Activated CD8-positive, alpha-beta T cell treated with anti-CD3 and anti-CD28 coated beads for 36 hours (primary cell): ENCODE measurements at regions of chr2 and their contacts with region 1.

Region 1: DNA sequence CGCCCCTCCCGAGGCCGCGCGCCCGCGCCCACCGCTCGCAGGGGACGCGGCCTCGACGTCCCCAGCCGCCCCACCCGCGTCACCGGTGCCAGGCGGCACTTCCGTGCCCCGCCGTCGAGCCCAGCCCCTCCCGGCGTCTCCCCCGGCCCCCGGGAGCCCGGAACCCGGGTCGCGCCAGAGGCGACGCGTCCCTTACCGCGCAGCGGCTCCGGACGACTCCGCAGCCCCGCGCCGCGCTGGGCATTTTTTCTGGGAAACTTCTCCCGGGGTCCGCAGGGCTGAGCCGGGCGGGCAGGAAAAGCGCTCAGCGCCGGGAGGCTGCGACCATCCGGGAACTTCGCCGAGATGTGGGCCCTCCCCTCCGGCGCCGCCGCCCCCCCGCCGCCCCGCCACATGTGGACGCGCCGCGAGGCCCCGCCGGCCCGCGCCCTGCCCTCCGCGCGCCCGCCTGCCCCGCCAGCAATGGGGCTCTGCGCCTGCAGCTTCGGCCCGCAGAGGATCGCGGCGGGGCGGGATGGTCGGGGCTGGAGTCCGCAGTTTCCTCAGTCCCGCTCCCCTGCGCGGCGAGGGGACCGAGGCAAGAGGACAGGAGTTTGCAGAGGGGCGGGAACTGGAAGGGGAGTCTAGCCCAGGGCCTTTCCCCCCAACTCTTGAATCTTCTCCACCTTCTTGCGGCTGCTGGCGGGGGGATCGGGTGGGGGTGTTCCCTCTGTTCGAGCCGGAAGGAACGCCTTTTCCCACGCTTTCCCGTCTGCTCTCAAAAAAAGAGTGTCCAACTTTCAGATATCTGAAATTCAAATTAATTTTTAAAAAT is 81.5 kb downstream of the CHRNA1 start:
- DNase-seq: peak; percentile 57
- ATAC-seq: peak; percentile 70
- H3K4me3 Mint-ChIP-seq: peak overlapping the region; percentile 88
- H3K27ac Mint-ChIP-seq: peak overlapping the region; percentile 92
- H3K4me1 Mint-ChIP-seq: peaks cover 62% of the 10 kb centered on the region
- H3K27me3 Mint-ChIP-seq: no peaks in the 10 kb centered on the region
- CTCF ChIP-seq: no peak

Region 2: DNA sequence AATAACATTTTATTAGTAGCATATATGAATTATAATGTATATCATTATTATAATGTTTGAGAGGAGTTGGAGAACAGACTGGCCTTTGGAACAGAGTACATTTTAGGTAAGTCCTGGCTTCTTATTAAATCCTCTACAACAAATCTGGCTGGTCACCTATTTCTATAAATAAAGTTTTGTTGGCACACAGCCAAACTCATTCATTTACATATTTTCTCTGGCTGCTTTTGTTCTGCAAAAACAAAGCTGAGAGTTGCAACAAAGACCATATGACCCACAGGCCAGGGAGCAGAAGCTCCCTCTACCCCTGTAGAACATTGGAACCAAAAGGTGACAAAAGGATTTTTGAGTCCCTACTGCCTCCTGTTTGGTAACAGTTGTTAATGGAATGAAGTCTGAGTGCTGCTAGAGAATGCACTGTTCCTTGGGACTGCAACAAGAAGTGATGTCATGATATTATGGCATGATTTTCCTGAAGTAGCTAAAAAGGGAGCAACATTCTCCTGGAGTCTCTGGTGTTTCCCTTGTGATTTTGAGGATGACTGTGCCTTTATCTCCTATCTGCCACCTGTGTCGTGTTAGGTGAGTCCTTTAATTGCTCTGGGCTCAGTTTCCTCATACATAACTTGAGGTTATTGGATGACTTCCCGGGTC is 370.1 kb before region 1 on chr2:
- CTCF ChIA-PET with region 1: no interaction called
- POLR2A ChIA-PET with region 1: no interaction called
- intact Hi-C with region 1: no loop called
- DNase-seq: no peak
- ATAC-seq: no peak
- H3K4me3 Mint-ChIP-seq: no peak overlapping the region
- H3K27ac Mint-ChIP-seq: no peak overlapping the region
- H3K4me1 Mint-ChIP-seq: no peaks in the 10 kb centered on the region
- H3K27me3 Mint-ChIP-seq: peaks cover 27% of the 10 kb centered on the region
- CTCF ChIP-seq: no peak

Region 3: GRCh38 chr2:174585146-174585954 is 97.4 kb before region 1 on chr2:
- CTCF ChIA-PET with region 1: interaction called, 143 read pairs
- POLR2A ChIA-PET with region 1: interaction called, 3 read pairs
- intact Hi-C with region 1: loop called (anchors 5 kb)
- DNase-seq: no peak
- ATAC-seq: no peak
- H3K4me3 Mint-ChIP-seq: no peak overlapping the region
- H3K27ac Mint-ChIP-seq: peak overlapping the region; percentile 27
- H3K4me1 Mint-ChIP-seq: peaks cover 91% of the 10 kb centered on the region
- H3K27me3 Mint-ChIP-seq: no peaks in the 10 kb centered on the region
- CTCF ChIP-seq: no peak

Region 4: DNA sequence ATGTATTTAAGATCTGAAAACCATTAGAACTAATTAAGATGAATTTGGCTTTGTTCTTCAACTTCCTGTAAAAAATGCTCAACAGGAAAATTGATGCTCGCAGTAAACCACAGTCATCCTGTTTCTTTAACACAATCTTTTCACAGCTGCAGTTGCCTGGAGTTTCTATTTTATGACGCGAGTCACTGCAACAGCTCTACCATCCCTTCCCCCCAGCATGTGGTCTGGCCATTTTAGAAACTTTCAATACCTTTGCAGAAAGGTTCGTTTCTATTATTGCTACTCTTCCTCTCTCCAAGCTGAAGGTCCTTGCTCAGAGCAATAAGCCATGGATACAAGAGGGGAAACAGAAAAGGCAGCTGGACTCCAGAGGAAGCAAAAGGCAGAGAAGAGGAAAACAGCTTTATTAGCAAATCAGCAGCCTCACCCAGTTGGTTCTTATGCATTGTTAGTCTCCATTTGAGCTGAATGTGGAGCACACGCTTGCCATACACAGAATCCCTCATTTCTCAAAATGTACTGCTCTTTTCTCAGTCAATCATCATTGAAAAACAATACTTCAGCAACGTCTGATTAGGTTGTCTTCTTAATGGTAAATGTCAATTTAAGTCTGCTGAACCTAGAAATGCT is 89.1 kb before region 1 on chr2:
- CTCF ChIA-PET with region 1: interaction called, 70 read pairs
- POLR2A ChIA-PET with region 1: interaction called, 43 read pairs
- intact Hi-C with region 1: loop called (anchors 5 kb)
- DNase-seq: peak; percentile 88
- ATAC-seq: peak; percentile 71
- H3K4me3 Mint-ChIP-seq: peak overlapping the region; percentile 87
- H3K27ac Mint-ChIP-seq: peak overlapping the region; percentile 99
- H3K4me1 Mint-ChIP-seq: peaks cover 40% of the 10 kb centered on the region
- H3K27me3 Mint-ChIP-seq: no peaks in the 10 kb centered on the region
- CTCF ChIP-seq: no peak

Region 5: GRCh38 chr2:174722942-174723592 is 40.3 kb after region 1 on chr2:
- CTCF ChIA-PET with region 1: no interaction called
- POLR2A ChIA-PET with region 1: no interaction called
- intact Hi-C with region 1: no loop called
- DNase-seq: no peak
- ATAC-seq: no peak
- H3K4me3 Mint-ChIP-seq: no peak overlapping the region
- H3K27ac Mint-ChIP-seq: no peak overlapping the region
- H3K4me1 Mint-ChIP-seq: peaks cover 19% of the 10 kb centered on the region
- H3K27me3 Mint-ChIP-seq: peaks cover 2% of the 10 kb centered on the region
- CTCF ChIP-seq: no peak

Region 6: DNA sequence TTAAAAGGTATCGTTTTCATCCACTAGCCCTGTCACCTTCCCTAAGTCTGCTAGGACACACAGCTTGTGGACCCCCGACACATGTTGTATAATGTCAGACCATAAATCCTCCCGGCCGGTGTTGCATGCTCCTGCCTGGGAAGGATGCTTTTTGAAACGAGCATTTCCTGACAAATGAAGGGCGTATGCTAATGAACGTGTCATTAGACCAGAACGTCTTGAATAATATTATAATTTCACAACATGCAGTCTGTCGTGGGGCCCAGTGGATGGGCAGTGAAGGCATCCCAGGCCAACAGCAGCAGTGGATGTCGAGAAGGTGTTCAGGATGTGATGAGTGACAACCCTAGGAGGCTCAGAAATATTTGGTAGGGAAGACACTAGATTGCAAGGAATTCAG is 74.0 kb after region 1 on chr2:
- CTCF ChIA-PET with region 1: no interaction called
- POLR2A ChIA-PET with region 1: no interaction called
- intact Hi-C with region 1: no loop called
- DNase-seq: no peak
- ATAC-seq: no peak
- H3K4me3 Mint-ChIP-seq: no peak overlapping the region
- H3K27ac Mint-ChIP-seq: no peak overlapping the region
- H3K4me1 Mint-ChIP-seq: peaks cover 21% of the 10 kb centered on the region
- H3K27me3 Mint-ChIP-seq: no peaks in the 10 kb centered on the region
- CTCF ChIP-seq: no peak